BJ (cell line): ENCODE measurements at regions of chr7 and their contacts with region 1.

Region 1: DNA sequence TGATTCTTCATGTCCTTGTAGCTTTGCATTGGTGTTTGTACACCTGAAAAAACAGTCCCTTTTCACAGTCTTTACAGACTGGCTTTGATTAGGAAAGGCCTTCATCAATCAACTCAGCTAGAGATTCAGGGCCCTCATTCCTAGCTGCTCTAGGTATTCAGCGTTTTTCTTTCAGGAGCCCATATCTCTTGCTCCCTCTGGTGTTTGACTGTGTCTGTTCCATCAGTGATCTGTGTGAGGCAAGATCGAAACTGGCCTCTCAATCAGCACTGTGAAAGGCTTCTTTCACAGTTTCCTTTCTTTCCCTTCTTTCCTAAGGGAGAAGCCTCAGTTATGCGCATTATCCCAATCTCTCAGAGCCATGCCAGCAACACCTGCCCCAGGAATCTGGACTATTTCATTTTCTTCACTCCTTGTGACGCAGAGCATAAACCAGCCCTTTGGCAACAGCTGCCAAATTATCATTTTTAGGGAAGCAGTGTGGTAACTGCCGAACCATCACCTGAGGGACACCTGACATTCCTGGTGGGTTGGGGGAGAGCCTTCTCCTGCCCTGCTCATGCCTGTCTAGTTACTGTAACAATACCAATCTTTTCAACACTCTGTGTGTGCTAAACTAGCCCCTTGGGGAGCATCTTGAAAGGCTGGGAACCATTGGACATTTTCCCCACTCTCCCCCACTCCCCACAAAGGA is 75.7 kb upstream of the CCDC71L start:
- DNase-seq: no peak
- H3K4me3 ChIP-seq: no peak overlapping the region
- H3K27me3 ChIP-seq: no peaks in the 10 kb centered on the region
- CTCF ChIP-seq: peak; percentile 80

Region 2: DNA sequence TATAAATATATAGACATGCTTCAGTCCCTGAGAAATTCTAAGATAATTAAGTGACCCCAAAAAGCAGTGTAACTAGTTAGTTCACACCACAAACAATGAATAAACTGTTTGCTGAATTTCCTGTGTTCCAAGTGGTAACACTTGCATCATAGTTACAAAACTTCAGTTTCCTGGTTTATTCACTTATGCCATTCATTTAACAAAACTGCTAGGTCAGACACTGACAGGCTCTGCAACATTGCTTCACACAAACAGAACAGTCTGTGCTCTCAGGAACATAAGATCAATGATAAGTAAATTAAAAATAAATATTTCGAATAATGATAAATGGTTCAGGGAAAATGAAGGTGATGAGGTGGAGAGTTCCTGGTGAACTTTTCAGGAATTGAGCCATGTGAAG is 318.6 kb before region 1 on chr7:
- CTCF ChIA-PET with region 1: no interaction called
- POLR2A ChIA-PET with region 1: no interaction called
- DNase-seq: no peak
- H3K4me3 ChIP-seq: no peak overlapping the region
- H3K27me3 ChIP-seq: no peaks in the 10 kb centered on the region
- CTCF ChIP-seq: no peak

Region 3: DNA sequence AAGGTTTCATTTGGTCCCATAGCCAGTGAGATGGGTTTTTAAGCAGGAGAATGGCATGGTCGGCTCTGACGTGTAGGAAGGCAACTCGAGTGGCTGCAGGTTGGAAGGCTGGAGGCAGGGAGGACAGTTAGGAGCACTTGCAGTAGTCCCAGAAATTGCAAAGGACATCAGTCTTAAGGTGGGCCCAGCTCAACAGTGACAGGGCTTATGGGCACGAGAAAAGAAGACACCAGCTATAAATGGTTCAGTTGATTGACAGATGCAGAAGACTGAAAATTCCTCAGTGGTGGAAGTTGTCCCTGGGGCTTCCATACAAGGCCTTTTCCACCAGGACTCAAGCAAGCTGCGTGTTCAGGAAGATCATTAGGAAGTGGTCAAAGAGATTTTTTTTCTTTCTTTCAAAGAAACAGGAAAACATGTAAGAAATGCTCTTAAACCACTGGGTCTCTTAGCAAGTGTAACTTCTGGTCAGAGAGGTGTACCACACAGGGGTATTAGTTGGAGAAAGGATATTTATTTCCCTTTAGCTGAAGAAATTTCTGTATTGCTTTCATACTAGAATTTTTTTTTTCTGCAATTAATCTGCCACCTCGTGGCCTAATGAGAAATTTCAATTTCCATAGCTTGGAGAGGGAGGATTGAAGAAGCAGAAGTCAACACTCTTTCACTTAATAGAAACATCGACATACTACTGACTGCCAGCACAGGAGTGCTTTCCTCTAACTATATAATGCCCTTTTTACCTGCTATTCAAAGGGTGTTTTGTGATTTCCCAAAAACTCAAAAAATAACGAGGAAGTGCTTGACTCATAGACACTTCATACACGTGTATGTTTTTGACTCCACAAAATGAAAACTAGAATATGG is 274.4 kb before region 1 on chr7:
- CTCF ChIA-PET with region 1: interaction called, 14 read pairs
- POLR2A ChIA-PET with region 1: no interaction called
- DNase-seq: no peak
- H3K4me3 ChIP-seq: no peak overlapping the region
- H3K27me3 ChIP-seq: no peaks in the 10 kb centered on the region
- CTCF ChIP-seq: peak; percentile 48

Region 4: GRCh38 chr7:106485031-106485551 is 251.6 kb before region 1 on chr7:
- CTCF ChIA-PET with region 1: interaction called, 26 read pairs
- POLR2A ChIA-PET with region 1: no interaction called
- DNase-seq: peak; percentile 91
- H3K4me3 ChIP-seq: no peak overlapping the region
- H3K27me3 ChIP-seq: no peaks in the 10 kb centered on the region
- CTCF ChIP-seq: no peak

Region 5: DNA sequence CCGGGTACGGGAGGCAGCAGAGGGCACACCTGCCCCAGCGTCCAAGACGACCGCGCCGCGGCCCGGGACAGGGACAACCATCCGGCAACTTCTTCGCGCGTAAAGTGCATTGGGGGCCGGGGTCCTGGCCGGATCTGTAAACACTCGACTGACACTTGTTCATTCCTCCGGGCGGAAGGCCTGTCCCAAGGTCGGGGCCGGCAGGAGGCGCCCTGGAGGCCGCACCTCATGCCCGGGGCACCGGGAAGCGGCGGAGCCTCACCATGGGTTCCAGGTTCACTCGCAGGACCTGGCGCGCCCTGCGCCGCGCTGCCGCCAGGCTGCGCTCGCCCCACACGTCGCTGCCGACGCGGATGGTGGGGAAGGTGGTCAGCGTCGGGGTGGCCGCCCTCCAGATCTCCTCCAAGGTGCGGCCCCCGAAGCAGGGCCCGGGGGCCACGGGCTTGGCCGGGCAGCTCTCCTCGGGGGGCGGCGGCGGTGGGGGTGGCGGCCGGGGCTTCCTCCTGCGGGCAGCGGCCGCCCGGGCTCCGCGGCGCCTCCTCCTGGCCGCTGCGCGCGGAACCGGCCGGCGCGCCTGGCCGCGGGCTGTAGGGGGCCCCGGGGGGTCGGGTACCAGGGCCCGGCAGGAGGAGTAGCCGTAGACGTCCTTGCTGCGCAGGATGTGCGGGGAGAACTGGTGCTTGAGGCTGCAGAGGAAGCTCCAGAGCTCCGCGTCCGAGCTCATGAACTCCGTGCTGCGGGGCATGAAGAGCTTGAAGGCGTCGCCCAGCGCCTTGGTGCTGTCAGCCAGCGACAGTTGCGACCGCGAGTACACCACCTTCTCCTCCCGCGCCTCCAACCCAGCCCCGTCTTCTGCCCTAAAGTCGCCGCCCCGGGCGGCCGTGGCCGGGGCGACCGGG is 76.4 kb before region 1 on chr7:
- CTCF ChIA-PET with region 1: interaction called, 50 read pairs
- POLR2A ChIA-PET with region 1: no interaction called
- DNase-seq: no peak
- H3K4me3 ChIP-seq: peak overlapping the region; percentile 99
- H3K27me3 ChIP-seq: no peaks in the 10 kb centered on the region
- CTCF ChIP-seq: peak; percentile 80